ENCODE measurements at regions of chr11 and their contacts with region 1.

Region 1: GRCh38 chr11:10808553-10809372 is at the start of gene EIF4G2:
- DNase-seq: peak; percentile 95 to 99 (median 98)
- ATAC-seq: peak; percentile 88 to 91
- H3K4me3 Mint-ChIP-seq: peak within 1 kb of the TSS; percentile 94 to 99 (median 97)
- H3K27ac Mint-ChIP-seq: peak within 1 kb of the TSS; percentile 96 to 100 (median 99)
- H3K4me1 Mint-ChIP-seq: peaks cover 22 to 52% (median 43%) of the 10 kb centered on the region in 4 donors
- H3K27me3 Mint-ChIP-seq: no peaks in the 10 kb centered on the region
- polyA plus RNA-seq, gene EIF4G2: 315 to 425 (median 340) TPM

Region 2: DNA sequence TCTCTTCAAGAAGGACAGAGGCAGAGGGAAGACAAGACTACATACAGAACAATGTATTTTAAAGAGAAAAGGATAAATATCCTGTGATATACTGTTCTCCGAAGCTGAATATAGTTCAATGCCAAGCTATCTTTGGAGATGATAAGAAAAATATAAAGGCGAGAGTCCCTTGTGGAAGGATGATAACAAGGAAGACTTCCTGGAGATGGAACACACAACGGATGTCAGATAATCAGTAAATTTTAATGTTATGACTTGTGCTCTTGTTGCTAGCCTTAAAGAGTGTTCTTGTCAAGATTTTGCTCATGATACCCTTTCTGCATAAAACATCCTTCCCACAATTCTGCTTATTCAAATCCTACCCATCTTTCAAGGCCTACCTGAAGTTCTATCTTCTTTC is 64.6 kb before region 1 on chr11:
- POLR2A ChIA-PET with region 1: no interaction called
- DNase-seq: no peak
- ATAC-seq: no peak
- H3K4me3 Mint-ChIP-seq: peak overlapping the region in 9 of 10 donors; percentile 51 to 81 (median 75)
- H3K27ac Mint-ChIP-seq: peak overlapping the region in 7 of 10 donors; percentile 30 to 82 (median 63)
- H3K4me1 Mint-ChIP-seq: peaks cover 15 to 33% (median 32%) of the 10 kb centered on the region in 4 donors
- H3K27me3 Mint-ChIP-seq: no peaks in the 10 kb centered on the region

Region 3: DNA sequence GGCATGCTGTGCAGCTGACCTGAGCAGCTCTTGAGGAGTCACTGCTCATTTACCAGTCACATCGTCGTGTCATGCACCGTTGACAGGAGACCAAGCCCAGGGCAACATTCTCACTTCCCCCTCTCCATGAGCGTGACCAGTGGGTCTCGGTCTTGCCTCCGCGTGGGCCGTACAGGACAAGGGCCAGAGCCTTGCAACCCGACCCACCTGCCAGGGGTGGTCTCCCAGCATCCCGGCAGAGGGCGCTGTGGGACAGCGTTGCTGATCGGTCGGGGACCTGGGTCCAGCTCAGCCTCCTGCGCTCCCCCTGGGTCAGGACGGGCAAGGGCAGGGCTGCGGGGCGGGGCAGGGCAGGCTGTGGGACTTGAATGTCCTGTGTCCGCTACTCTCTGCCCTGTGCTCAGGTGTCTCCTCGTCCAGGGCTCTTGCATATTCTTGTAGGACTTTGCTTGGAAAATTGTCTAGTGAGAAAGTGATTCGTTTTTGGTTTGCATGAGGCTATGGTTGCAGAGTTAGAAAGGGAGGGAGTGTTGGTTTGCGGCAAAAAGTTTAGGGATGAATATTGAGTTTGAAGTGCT is 16.3 kb before region 1 on chr11:
- POLR2A ChIA-PET with region 1: interaction called, 62 read pairs
- DNase-seq: peak; percentile 66 to 91 (median 80)
- ATAC-seq: peak; percentile 82 to 88
- H3K4me3 Mint-ChIP-seq: peak overlapping the region in 5 of 10 donors; percentile 1 to 57 (median 8)
- H3K27ac Mint-ChIP-seq: peak overlapping the region in 1 of 10 donors; percentile 10
- H3K4me1 Mint-ChIP-seq: peaks cover 14 to 30% (median 25%) of the 10 kb centered on the region in 4 donors
- H3K27me3 Mint-ChIP-seq: peaks cover 0 to 22% (median 6%) of the 10 kb centered on the region in 5 donors

Region 4: DNA sequence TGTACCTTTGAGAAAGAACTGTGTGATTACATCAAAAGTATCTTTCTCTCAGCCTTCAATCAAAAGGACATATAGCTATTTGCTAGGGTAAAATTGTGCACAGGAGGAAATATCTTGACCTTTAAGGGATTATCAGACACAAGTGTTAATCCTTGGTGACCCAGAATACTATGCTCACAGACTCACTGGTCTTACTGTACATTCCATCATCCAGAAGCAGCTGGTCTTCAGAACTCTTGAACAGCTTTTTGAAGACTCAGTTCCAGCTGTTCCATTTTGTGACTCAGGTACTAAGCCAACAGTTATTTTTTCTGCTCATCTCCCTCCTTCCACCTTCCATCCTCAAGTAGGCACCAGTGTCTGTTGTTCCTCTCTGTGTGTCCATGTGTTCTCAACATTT is 29.3 kb after region 1 on chr11:
- POLR2A ChIA-PET with region 1: interaction called, 17 read pairs
- DNase-seq: no peak
- ATAC-seq: no peak
- H3K4me3 Mint-ChIP-seq: no peak overlapping the region
- H3K27ac Mint-ChIP-seq: peak overlapping the region in 1 of 10 donors; percentile 17
- H3K4me1 Mint-ChIP-seq: peaks cover 4 to 18% (median 9%) of the 10 kb centered on the region in 4 donors
- H3K27me3 Mint-ChIP-seq: no peaks in the 10 kb centered on the region

Region 5: DNA sequence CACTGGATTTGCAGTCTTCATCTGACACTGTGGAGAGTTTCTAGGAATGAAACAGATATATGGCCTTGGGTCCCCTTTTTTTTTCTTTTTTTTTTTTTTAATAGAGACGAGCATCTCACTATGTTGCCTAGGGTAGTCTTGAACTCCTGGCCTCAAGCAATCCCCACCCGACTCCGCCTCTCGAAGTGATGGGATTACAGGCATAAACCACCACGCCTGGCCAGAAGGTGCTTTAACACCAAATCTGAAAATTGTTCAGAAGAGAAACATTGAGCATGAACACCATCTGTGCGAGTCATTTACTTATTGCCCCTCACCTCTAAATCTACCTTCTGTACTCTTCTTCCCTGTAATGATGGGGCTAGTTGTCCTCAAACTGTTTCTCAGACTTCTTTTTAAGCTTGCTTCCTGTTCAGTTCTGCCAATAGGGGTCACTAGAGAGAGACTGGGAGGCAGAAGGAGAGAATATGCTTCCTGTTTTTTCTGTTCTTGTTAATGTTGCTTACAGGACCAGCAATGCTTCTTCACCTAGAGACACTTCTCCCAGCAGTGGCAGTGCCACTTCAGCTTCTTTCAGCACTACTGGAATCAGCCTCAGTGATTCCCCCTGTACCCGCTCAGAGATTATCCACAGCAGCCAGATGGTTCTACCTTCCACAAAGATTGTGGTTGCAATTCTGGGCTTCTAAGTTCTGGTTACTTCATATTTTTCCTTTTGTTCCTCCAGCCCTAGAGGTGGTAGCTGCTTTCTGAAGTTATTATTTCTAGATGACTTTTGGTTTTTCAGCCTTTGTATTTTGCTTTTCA is 69.8 kb after region 1 on chr11:
- POLR2A ChIA-PET with region 1: interaction called, 20 read pairs
- DNase-seq: peak in 6 of 10 donors; percentile 4 to 63 (median 46)
- ATAC-seq: peak; percentile 66 to 79
- H3K4me3 Mint-ChIP-seq: peak overlapping the region in 2 of 10 donors; percentile 8 to 25
- H3K27ac Mint-ChIP-seq: peak overlapping the region in 6 of 10 donors; percentile 23 to 82 (median 64)
- H3K4me1 Mint-ChIP-seq: peaks cover 11 to 28% (median 17%) of the 10 kb centered on the region in 4 donors
- H3K27me3 Mint-ChIP-seq: no peaks in the 10 kb centered on the region

Region 6: DNA sequence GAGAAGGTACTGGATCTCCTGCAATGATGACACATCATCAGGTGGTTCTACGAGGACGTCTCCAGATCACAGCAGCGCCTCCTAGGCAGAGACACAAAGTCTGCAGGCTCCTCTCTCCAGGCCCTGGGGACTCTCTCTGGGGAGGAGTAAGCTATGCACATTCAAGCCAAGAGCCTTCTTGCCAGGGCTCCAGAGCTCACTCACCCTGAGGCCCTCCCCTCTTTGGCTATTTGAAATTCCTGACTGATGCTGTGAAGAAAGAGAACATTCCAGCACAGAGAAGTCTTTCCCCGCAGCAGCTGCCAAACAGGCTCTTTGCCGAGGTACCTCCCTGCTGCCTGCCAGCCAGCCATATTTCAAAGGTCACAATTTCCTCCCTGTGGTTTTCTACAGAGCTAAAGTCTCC is 339.3 kb after region 1 on chr11:
- POLR2A ChIA-PET with region 1: interaction called, 25 read pairs
- DNase-seq: peak in 1 of 10 donors; percentile 15
- ATAC-seq: no peak
- H3K4me3 Mint-ChIP-seq: peak overlapping the region; percentile 7 to 78 (median 30)
- H3K27ac Mint-ChIP-seq: peak overlapping the region; percentile 66 to 99 (median 96)
- H3K4me1 Mint-ChIP-seq: peaks cover 32 to 61% (median 47%) of the 10 kb centered on the region in 4 donors
- H3K27me3 Mint-ChIP-seq: no peaks in the 10 kb centered on the region